ENCODE measurements at regions of chr2 and their contacts with region 1.

Region 1: DNA sequence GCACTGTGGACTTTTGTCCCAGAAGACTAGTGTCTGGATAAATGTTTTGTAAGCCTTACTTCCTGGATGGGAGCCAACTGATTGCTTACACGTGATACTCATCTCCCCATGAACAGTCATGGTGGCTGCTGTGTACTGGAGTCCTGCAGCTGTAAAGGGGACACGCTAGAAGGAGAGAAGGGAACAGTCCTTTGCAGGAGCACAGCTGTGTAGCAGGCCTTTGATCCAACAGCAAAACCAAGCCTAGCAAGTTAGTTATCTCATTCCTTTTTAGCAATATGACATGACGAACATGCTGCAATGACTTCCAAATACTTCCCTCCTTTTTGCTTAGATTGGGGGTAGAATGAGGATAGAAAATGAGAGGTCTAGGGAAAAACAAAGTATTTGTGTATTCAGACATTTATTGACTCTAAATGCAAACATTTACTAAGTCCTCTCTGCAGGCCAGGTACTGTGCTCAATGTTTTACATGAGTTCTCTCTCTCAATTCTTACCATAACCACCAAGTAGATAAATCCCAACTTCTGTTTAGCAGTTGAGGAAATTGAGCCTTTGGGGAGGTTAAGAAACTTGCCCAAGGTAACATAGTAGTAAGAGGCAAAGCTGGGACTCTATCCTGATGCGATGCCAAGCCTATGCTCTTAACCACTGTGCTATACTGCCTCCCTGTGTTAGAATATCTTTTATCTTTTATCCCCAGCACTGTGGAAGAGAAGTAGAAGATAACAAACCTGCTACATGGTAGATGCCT is 55.4 kb upstream of the CD28 start:
- DNase-seq: peak; percentile 59 to 62
- H3K4me3 ChIP-seq: no peak overlapping the region
- H3K27ac ChIP-seq: peak overlapping the region; percentile 65 to 81 (median 68)
- H3K4me1 ChIP-seq: peaks cover 22 to 25% of the 10 kb centered on the region in 2 donors
- H3K27me3 ChIP-seq: no peaks in the 10 kb centered on the region
- CTCF ChIP-seq: peak in 4 of 6 experiments; percentile 47 to 73 (median 68)
- POLR2A ChIP-seq: no peak

Region 2: DNA sequence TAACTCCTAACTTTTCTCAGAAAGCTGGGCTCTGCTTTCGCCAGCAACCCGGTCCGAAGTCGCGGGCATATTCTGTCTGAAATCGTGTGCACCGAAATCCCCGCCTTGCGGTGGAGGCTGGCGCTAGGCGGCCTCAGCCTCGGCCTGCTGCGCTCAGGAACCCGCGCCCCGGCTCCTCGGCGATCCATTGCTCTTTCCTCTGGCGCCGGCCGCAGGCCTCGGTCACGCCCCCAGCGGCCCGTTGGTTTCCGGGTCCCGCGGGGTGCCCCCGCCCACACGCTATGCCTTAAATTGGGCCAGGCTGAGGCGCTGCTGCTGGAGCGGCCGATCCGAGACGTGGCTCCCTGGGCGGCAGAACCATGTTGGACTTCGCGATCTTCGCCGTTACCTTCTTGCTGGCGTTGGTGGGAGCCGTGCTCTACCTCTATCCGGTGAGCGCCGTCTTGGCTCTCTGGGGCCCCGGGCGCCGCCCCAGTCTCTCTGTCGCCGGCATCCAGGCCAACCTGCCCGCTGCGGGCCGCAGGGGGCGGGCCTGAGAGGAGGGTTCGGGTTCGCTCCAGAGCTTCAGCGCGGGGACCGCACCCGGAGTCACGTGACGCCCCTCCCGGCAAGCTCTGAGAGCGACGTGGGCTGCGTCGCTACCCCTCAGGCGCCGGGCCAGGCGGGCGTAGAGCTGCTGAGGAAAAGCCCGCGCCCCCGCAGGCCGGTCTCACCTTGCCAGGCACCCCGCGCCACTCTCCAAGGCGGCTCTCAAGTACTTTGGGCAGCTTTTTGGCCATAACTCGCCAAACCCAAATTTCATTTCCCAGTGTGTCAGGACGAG is 412.1 kb before region 1 on chr2 and contains the start of gene CYP20A1:
- intact Hi-C with region 1: loop called (anchors 10 kb)
- DNase-seq: peak; percentile 96 to 97
- H3K4me3 ChIP-seq: peak within 1 kb of the TSS; percentile 76 to 84 (median 79)
- H3K27ac ChIP-seq: peak within 1 kb of the TSS; percentile 90 to 98 (median 98)
- H3K4me1 ChIP-seq: peaks cover 0 to 16% of the 10 kb centered on the region in 2 donors
- H3K27me3 ChIP-seq: no peaks in the 10 kb centered on the region
- CTCF ChIP-seq: peak in 3 of 6 experiments; percentile 18 to 43 (median 38)
- POLR2A ChIP-seq: peak; percentile 57 to 87
- total RNA-seq, gene CYP20A1: 41.4 to 59.5 (median 48.2) TPM

Region 3: DNA sequence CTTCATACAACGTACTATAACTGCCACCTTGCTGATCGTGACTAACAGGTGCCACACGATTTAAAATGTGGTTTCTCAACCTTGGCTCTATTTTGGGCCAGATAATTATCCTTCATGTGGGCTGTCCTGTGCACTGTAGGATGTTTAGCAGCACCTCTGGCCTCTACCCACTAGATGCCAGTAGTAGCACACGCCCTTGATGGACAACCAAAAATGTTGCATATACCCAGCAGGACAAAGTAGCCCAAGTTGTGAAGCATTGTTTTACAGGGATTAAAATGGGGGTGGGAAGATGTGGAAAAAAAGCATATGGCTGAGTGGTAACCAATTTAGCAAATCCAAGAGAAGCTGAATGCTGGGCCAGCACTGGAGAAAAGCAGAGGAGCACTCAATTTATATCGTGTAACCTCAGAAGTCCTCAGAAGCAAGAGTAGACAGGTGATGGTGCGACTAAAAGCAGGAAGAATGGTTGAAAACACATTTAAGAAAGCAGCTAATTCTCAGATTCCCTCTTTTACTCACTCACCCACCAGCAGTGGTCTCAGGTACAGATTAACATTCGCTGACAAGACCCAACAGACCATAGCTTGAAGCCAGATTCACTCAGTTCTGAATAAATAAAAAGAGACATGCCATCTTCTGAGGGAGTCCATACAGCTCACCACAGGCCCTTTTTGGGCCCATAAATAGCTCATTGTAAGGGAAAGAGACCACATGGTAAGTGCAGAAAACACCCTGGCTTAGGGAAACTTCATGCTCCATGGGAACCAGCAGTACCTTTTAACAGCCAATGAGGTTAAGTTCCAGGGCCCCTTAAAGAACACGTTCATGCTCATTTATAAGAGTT is 166.5 kb before region 1 on chr2:
- intact Hi-C with region 1: loop called (anchors 10 kb)
- DNase-seq: peak; percentile 19 to 30
- H3K4me3 ChIP-seq: no peak overlapping the region
- H3K27ac ChIP-seq: peak overlapping the region in 2 of 3 donors; percentile 43 to 52
- H3K4me1 ChIP-seq: peaks cover 6 to 11% of the 10 kb centered on the region in 2 donors
- H3K27me3 ChIP-seq: no peaks in the 10 kb centered on the region
- CTCF ChIP-seq: peak in 5 of 6 experiments; percentile 19 to 62 (median 54)
- POLR2A ChIP-seq: no peak

Region 4: GRCh38 chr2:203804070-203804469 is 153.0 kb after region 1 on chr2:
- intact Hi-C with region 1: no loop called
- DNase-seq: no peak
- H3K4me3 ChIP-seq: no peak overlapping the region
- H3K27ac ChIP-seq: no peak overlapping the region
- H3K4me1 ChIP-seq: peaks cover 1% of the 10 kb centered on the region in 2 donors
- H3K27me3 ChIP-seq: no peaks in the 10 kb centered on the region
- CTCF ChIP-seq: no peak
- POLR2A ChIP-seq: no peak